A549 (cell line): ENCODE measurements at regions of chr17 and their contacts with region 1.

Region 1: GRCh38 chr17:39069114-39069756 is 82.2 kb downstream of the PLXDC1 start:
- DNase-seq: peak; percentile 58 to 93
- ATAC-seq: peak; percentile 75 to 92; a peak in 5 of 6 replicates
- H3K4me3 ChIP-seq: no peak overlapping the region
- H3K27ac ChIP-seq: no peak overlapping the region
- H3K4me1 ChIP-seq: no peaks in the 10 kb centered on the region
- CTCF ChIP-seq: peak; percentile 66
- EP300 ChIP-seq: no peak
- POLR2A ChIP-seq: no peak
- RAD21 ChIP-seq: peak; percentile 63 to 73

Region 2: DNA sequence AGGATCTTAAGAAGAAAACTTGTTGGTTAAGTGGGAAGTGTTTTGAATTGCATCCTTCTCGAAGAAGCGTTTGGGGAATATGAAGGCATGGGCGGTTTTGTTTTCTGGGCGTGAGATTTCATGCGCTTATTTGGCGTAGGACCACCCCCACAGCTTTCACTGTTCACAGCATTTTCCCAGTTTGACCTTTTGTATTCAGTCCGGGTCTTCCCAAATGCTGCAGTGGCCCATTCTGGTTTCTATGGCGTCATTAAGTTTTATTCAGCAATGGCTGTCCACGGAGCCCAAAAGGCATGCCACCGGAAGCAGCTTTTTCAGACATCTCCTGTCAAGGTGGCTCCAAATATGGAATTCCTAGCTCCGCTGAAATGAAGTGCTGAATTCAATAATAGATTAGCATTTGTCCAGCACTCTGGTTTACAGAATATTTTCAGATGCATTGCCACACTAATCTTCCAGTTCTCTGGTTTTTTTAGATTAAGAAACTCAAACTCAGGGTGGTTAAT is 11.5 kb before region 1 on chr17:
- CTCF ChIA-PET with region 1: interaction called, 13 read pairs
- POLR2A ChIA-PET with region 1: no interaction called
- DNase-seq: no peak
- ATAC-seq: no peak
- H3K4me3 ChIP-seq: no peak overlapping the region; the same call in 1 of the 3 replicates
- H3K27ac ChIP-seq: peak overlapping the region in 1 of 2 experiments; percentile 89; a peak in 3 of 6 replicates
- H3K4me1 ChIP-seq: no peaks in the 10 kb centered on the region
- CTCF ChIP-seq: no peak
- EP300 ChIP-seq: no peak
- POLR2A ChIP-seq: no peak
- RAD21 ChIP-seq: no peak

Region 3: DNA sequence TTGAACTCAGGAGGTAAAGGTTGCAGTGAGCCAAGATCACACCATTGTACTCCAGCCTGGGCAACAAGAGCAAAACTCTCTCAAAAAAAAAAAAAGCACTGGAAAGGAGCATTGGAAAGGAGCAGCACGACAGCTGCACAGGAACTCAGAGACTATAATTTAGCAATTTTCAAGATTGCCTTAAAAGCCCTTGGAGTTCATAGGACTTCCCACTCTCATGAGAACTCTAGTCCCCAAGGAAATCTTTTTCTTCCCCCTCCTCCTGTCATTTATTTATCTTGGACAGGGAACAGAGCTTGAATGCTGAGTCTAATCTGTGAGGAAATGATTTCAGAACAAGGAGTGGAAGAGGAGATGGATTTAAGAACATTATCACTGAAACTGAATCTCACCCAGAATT is 13.2 kb after region 1 on chr17:
- CTCF ChIA-PET with region 1: interaction called, 13 read pairs
- POLR2A ChIA-PET with region 1: no interaction called
- DNase-seq: no peak
- ATAC-seq: no peak
- H3K4me3 ChIP-seq: no peak overlapping the region
- H3K27ac ChIP-seq: no peak overlapping the region
- H3K4me1 ChIP-seq: no peaks in the 10 kb centered on the region
- CTCF ChIP-seq: no peak
- EP300 ChIP-seq: no peak
- POLR2A ChIP-seq: no peak
- RAD21 ChIP-seq: no peak

Region 4: GRCh38 chr17:39115135-39115534 is 45.9 kb after region 1 on chr17:
- CTCF ChIA-PET with region 1: no interaction called
- POLR2A ChIA-PET with region 1: no interaction called
- DNase-seq: no peak
- ATAC-seq: no peak
- H3K4me3 ChIP-seq: no peak overlapping the region
- H3K27ac ChIP-seq: peak overlapping the region in 1 of 2 experiments; percentile 57; a peak in 2 of 6 replicates
- H3K4me1 ChIP-seq: no peaks in the 10 kb centered on the region
- CTCF ChIP-seq: no peak
- EP300 ChIP-seq: no peak
- POLR2A ChIP-seq: no peak
- RAD21 ChIP-seq: no peak